HepG2 (cell line): ENCODE measurements at regions of chr2 and their contacts with region 1.

Region 1: DNA sequence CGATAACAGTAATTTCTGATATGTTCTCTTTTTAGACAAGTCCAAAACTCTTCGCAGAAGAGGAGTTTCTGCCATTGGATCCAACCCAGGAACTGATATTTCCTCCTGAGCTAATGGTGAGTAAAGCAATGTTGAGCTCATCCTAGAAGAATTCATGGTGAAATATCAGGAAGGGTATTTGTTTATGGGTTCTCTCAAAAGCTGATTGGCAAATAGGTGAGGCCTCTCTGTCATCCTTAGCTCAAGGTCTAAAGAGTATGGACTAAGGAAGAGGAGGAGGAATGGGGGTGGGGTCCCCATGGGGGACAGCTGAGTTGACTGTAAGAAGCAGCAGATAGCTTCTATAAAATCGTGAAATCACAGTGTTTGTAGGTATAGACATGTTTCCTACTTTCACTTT is 18.2 kb downstream of the AOX1 start:
- DNase-seq: peak; percentile 90
- ATAC-seq: peak; percentile 95
- H3K4me3 ChIP-seq: no peak overlapping the region
- H3K27ac ChIP-seq: peak overlapping the region; percentile 53
- H3K4me1 ChIP-seq: peaks cover 21% of the 10 kb centered on the region
- H3K27me3 ChIP-seq: no peaks in the 10 kb centered on the region
- CTCF ChIP-seq: no peak
- EP300 ChIP-seq: peak; percentile 50 to 68; a peak in 3 of 4 replicates
- POLR2A ChIP-seq: no peak
- RAD21 ChIP-seq: no peak

Region 2: DNA sequence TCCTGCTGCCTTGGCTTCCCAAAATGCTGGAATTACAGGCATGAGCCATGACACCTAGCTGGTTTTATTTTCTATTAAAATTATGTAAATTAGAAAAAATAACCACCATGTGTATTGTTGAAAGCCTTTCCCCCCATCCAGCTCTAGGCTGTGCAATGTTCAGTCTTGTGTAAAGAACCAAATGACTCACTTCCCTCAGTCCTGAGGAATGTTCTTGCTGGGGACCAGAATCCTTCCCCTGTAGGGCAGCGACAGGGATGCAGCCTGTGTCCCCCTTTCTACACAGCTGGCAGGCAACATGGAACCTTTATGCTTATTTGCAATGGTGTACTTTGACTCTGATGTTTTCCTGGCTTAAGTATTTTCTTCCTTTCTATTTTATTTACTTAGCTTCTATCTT is 11.3 kb after region 1 on chr2:
- CTCF ChIA-PET with region 1: no interaction called
- POLR2A ChIA-PET with region 1: interaction called, 29 read pairs
- in situ Hi-C with region 1: no loop called
- intact Hi-C with region 1: no loop called
- DNase-seq: peak; percentile 68
- ATAC-seq: peak; percentile 98
- H3K4me3 ChIP-seq: no peak overlapping the region
- H3K27ac ChIP-seq: no peak overlapping the region
- H3K4me1 ChIP-seq: peaks cover 22% of the 10 kb centered on the region
- H3K27me3 ChIP-seq: no peaks in the 10 kb centered on the region
- CTCF ChIP-seq: no peak
- EP300 ChIP-seq: no peak; a peak in 1 of 4 replicates
- POLR2A ChIP-seq: no peak
- RAD21 ChIP-seq: no peak